Activated CD4-positive, alpha-beta memory T cell treated with anti-CD3 and anti-CD28 coated beads, Interleukin-2, amount 10 ng/mL, durations not matched to agents 7 days and 5 days (primary cell): ENCODE measurements at regions of chr1 and their contacts with region 1.

Region 1: DNA sequence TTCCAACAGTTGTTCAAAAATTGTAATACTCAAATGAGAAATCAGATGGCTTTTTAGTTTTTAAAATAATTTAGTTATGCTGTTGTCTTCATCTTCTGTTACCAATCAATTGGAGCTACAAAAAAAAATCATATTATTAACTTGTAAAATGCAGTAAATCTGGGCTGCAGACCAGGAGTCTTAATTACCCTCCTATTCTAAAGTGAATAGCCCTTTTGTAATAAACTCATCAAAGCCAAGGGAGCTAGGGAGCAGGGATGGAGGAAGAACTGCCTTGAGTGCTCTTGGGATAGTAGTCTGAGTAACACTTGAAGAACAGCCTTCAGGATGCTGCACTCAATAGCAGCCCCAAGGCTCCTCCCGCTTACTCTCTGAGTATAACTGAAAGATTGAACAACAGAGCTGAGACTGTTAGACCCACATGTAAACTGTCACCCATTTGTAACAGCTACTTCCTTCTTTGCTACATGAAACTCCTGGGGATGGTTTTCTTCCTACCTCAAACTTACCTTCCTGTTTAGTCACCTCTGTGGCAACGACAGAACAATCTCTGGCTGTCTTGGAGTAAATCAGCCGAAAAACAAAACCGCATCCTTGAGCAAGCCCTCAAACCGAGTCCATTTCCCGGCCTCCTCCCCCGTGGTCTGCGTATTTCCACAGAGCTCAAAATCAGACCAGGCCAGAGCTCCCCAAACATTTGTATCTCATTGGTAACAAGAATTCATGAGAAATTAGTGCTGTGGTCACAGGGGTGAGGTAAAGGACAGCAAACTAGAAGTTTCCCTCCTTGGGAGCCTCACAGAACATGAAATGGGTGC is 55.9 kb downstream of the CD58 start:
- DNase-seq: peak; percentile 80
- H3K4me3 Mint-ChIP-seq: peak overlapping the region; percentile 57
- H3K27ac Mint-ChIP-seq: peak overlapping the region; percentile 93
- H3K4me1 Mint-ChIP-seq: peaks cover 74% of the 10 kb centered on the region
- H3K27me3 Mint-ChIP-seq: no peaks in the 10 kb centered on the region

Region 2: DNA sequence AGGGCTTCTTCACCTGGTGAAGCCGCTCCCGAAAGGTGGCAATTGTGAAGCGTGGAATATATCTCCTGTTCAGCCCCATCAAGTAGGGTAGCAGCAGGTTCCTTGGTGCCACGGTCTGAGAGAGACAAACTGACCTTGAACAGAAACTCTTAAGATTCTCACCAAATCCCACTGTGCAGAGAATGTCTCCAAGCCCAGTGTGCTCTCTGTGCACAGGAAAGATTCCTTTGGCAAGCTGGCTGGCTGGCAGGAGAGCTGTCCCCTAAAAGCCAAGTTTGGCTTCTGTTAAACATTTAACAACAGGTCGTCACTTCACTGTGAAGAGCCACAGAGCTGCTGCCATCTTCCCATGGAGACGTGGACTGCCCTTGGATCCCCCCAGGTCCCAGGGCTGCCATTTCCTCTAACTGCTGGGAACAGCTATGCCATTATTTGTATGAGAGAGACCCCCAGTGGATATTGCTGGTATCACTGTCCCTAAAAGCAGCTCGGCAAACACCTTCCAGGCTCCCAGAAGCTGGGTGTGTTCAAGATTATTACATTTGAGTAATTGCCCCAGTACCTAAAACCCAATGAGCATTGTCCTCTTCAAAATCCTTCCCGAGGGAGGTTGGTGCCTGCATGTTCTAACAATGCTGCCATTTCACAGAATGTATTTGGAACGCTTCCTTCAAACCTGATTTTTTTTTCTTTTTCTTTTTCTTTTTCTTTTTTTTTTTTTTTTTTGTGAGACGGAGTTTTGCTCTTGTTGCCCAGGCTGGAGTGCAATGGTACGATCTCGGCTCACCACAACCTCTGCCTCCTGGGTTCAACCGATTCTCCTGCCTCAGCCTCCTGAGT is 15.9 kb before region 1 on chr1:
- CTCF ChIA-PET with region 1: interaction called, 31 read pairs
- POLR2A ChIA-PET with region 1: interaction called, 92 read pairs
- DNase-seq: peak; percentile 54
- H3K4me3 Mint-ChIP-seq: no peak overlapping the region
- H3K27ac Mint-ChIP-seq: peak overlapping the region; percentile 53
- H3K4me1 Mint-ChIP-seq: peaks cover 64% of the 10 kb centered on the region
- H3K27me3 Mint-ChIP-seq: no peaks in the 10 kb centered on the region

Region 3: GRCh38 chr1:116538544-116538943 is 23.6 kb after region 1 on chr1:
- CTCF ChIA-PET with region 1: interaction called, 4 read pairs
- POLR2A ChIA-PET with region 1: interaction called, 46 read pairs
- DNase-seq: peak; percentile 57
- H3K4me3 Mint-ChIP-seq: no peak overlapping the region
- H3K27ac Mint-ChIP-seq: peak overlapping the region; percentile 77
- H3K4me1 Mint-ChIP-seq: peaks cover 57% of the 10 kb centered on the region
- H3K27me3 Mint-ChIP-seq: no peaks in the 10 kb centered on the region

Region 4: GRCh38 chr1:116556289-116557006 is 41.5 kb after region 1 on chr1:
- CTCF ChIA-PET with region 1: interaction called, 9 read pairs
- POLR2A ChIA-PET with region 1: interaction called, 11 read pairs
- DNase-seq: peak; percentile 84
- H3K4me3 Mint-ChIP-seq: peak overlapping the region; percentile 31
- H3K27ac Mint-ChIP-seq: peak overlapping the region; percentile 88
- H3K4me1 Mint-ChIP-seq: peaks cover 84% of the 10 kb centered on the region
- H3K27me3 Mint-ChIP-seq: no peaks in the 10 kb centered on the region